CD4-positive, alpha-beta T cell (primary cell): ENCODE measurements at regions of chr1 and their contacts with region 1.

Region 1: GRCh38 chr1:146012737-146013403 is 8.7 kb downstream of the HJV start:
- DNase-seq: peak in 12 of 14 experiments; percentile 26 to 85 (median 50)
- ATAC-seq: peak; percentile 73
- H3K4me3 ChIP-seq: no peak overlapping the region
- H3K4me3 Mint-ChIP-seq: no peak overlapping the region
- H3K27ac ChIP-seq: no peak overlapping the region
- H3K27ac Mint-ChIP-seq: no peak overlapping the region
- H3K4me1 ChIP-seq: peaks cover 1% of the 10 kb centered on the region
- H3K4me1 Mint-ChIP-seq: peaks cover 11% of the 10 kb centered on the region
- H3K27me3 ChIP-seq: peaks cover 0 to 3% of the 10 kb centered on the region in 2 experiments
- H3K27me3 Mint-ChIP-seq: peaks cover 8% of the 10 kb centered on the region
- CTCF ChIP-seq: peak; percentile 95

Region 2: DNA sequence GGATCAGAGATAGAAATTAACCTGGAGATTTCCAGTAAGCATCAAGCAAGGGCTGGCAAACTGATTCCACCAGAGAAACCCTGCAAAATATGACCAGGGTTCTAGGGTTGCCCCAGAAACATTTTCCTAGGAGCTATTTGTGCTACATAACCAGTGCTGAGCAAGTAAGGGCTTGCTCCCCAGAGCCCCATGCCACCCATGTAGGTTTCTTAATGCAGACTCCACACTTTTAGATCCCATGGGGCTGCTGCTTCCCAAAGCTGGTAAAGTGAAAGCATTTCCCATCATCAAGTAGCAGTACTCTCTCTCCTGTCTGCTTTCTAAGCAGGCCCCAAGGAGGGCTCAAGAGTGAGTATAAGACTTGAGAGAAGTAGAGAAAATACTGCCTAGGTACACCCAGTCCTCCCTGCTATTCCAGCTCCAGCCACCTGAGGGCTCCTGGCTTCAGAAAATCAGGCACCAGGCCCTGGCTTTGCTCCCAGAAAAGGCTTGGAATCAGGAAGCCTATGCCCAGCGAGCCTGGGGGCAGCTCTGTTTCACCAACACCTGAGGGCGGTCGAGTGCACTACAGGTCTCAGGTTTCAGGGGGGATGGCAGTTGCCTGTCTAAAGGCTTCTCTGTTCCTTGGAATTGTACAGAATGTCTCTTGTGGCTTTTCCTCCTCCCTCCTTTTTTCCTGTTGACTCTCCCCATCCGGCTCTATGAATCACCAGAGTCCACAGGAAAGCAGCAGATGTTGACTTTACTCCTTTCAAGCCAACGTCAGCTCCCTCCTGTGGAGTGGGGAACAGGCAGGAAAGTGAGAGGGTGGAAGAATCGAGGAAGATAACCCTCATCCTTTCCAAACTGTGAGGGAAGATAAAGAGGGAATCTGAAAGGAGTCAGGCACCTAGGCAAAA is 121.0 kb before region 1 on chr1:
- CTCF ChIA-PET with region 1: interaction called, 7 read pairs
- POLR2A ChIA-PET with region 1: no interaction called
- intact Hi-C with region 1: loop called (anchors 1 kb)
- DNase-seq: peak; percentile 18 to 70 (median 40)
- ATAC-seq: peak; percentile 70
- H3K4me3 ChIP-seq: no peak overlapping the region
- H3K4me3 Mint-ChIP-seq: no peak overlapping the region
- H3K27ac ChIP-seq: no peak overlapping the region
- H3K27ac Mint-ChIP-seq: no peak overlapping the region
- H3K4me1 ChIP-seq: no peaks in the 10 kb centered on the region
- H3K4me1 Mint-ChIP-seq: no peaks in the 10 kb centered on the region
- H3K27me3 ChIP-seq: no peaks in the 10 kb centered on the region
- H3K27me3 Mint-ChIP-seq: no peaks in the 10 kb centered on the region
- CTCF ChIP-seq: peak; percentile 82

Region 3: GRCh38 chr1:145978854-145979759 is 33.8 kb before region 1 on chr1:
- CTCF ChIA-PET with region 1: interaction called, 151 read pairs
- POLR2A ChIA-PET with region 1: interaction called, 144 read pairs
- intact Hi-C with region 1: loop called (anchors 1 kb)
- DNase-seq: peak in 13 of 14 experiments; percentile 45 to 97 (median 66)
- ATAC-seq: peak; percentile 69
- H3K4me3 ChIP-seq: peak overlapping the region; percentile 45
- H3K4me3 Mint-ChIP-seq: no peak overlapping the region
- H3K27ac ChIP-seq: peak overlapping the region; percentile 93 to 94
- H3K27ac Mint-ChIP-seq: no peak overlapping the region
- H3K4me1 ChIP-seq: peaks cover 69% of the 10 kb centered on the region
- H3K4me1 Mint-ChIP-seq: peaks cover 6% of the 10 kb centered on the region
- H3K27me3 ChIP-seq: no peaks in the 10 kb centered on the region
- H3K27me3 Mint-ChIP-seq: no peaks in the 10 kb centered on the region
- CTCF ChIP-seq: peak; percentile 28

Region 4: DNA sequence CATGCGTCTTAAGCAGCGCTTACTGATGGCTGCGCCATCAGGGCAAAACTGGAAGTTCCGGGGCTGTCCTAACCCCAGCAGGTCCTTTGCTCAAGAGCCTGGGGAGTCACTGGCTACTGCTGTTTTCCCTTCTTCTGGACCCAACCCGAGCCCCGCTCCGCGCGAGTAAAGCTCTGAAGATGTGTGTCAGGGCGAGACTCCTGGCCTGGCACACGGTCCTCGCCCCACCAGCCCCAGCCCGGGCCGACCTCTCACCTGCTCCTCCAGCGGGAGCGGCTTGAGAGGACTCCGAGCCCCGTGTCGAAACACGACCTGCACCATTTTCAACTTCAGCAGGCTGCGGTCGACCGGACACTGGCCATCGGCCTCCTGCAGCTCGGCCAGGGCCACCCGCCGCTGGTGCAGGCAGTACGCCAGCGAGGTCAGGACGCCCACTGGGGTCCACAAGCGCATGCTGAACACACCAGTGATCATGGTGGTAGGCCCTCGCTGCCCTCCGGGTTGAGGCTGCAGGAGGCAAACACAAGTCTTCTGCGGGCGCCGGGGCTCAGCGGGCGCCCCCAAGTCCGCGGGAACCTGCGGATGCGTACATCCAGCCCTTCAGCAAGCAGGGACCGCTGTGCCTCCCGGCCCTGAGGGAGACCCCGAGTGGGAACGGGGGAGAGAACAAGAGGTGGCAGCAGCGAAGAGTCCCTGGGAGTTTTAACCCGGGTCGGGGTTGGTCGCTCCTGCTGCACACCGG is 1656.9 kb after region 1 on chr1:
- CTCF ChIA-PET with region 1: no interaction called
- POLR2A ChIA-PET with region 1: no interaction called
- intact Hi-C with region 1: no loop called
- DNase-seq: peak in 13 of 14 experiments; percentile 5 to 66 (median 33)
- ATAC-seq: peak; percentile 37
- H3K4me3 ChIP-seq: peak overlapping the region; percentile 85
- H3K4me3 Mint-ChIP-seq: peak overlapping the region; percentile 97
- H3K27ac ChIP-seq: peak overlapping the region; percentile 12 to 25
- H3K27ac Mint-ChIP-seq: peak overlapping the region; percentile 72
- H3K4me1 ChIP-seq: peaks cover 11% of the 10 kb centered on the region
- H3K4me1 Mint-ChIP-seq: peaks cover 28% of the 10 kb centered on the region
- H3K27me3 ChIP-seq: no peaks in the 10 kb centered on the region
- H3K27me3 Mint-ChIP-seq: peaks cover 11% of the 10 kb centered on the region
- CTCF ChIP-seq: no peak

Region 5: GRCh38 chr1:147850759-147851508 is 1838.1 kb after region 1 on chr1:
- CTCF ChIA-PET with region 1: no interaction called
- POLR2A ChIA-PET with region 1: no interaction called
- intact Hi-C with region 1: no loop called
- DNase-seq: no peak
- ATAC-seq: no peak
- H3K4me3 ChIP-seq: no peak overlapping the region
- H3K4me3 Mint-ChIP-seq: no peak overlapping the region
- H3K27ac ChIP-seq: no peak overlapping the region
- H3K27ac Mint-ChIP-seq: no peak overlapping the region
- H3K4me1 ChIP-seq: no peaks in the 10 kb centered on the region
- H3K4me1 Mint-ChIP-seq: no peaks in the 10 kb centered on the region
- H3K27me3 ChIP-seq: peaks cover 0 to 5% of the 10 kb centered on the region in 2 experiments
- H3K27me3 Mint-ChIP-seq: peaks cover 18% of the 10 kb centered on the region
- CTCF ChIP-seq: no peak